Sigmoid colon (tissue), 7 donors: ENCODE measurements at regions of chr3 and their contacts with region 1.

Region 1: DNA sequence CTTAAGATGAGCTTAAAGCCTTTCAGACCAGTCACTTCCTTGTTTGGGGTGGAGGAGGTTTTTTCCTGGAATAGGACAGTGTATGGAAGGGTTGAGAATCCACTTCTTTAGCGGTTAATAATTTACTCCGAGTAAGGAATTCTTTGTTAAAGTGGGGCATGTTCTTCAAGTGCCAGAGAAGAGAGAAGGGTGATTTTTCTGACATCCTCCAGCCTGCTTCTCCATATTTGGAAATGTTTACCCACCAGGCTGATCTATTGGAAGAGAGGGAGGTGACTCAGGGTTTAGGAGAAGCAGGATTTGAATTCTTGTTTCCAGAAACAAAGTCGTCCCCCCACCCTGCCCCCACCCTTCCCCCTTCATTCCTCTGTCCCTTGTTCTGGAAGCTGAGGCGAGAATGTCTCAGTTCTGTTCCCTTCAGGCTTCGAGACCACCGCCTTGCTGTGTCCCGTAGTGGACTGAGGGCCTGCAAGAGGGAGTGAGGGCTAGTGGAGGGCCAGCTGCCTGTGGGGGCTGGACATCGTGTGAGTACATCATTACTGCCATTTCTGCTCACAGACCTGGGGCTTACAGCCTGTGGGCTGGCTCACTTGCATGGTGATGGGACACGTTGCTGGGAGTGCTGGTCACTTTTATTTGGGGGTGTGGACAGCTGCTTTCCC is 58.5 kb downstream of the LPP start:
- DNase-seq: peak; percentile 83
- H3K4me3 ChIP-seq: peak overlapping the region; percentile 41 to 56 (median 47)
- H3K27ac ChIP-seq: peak overlapping the region; percentile 84 to 97 (median 93)
- H3K4me1 ChIP-seq: peaks cover 0 to 70% (median 54%) of the 10 kb centered on the region in 4 donors
- H3K27me3 ChIP-seq: no peaks in the 10 kb centered on the region
- CTCF ChIP-seq: no peak
- EP300 ChIP-seq: peak; percentile 66 to 92 (median 80)
- POLR2A ChIP-seq: peak; percentile 32 to 51

Region 2: DNA sequence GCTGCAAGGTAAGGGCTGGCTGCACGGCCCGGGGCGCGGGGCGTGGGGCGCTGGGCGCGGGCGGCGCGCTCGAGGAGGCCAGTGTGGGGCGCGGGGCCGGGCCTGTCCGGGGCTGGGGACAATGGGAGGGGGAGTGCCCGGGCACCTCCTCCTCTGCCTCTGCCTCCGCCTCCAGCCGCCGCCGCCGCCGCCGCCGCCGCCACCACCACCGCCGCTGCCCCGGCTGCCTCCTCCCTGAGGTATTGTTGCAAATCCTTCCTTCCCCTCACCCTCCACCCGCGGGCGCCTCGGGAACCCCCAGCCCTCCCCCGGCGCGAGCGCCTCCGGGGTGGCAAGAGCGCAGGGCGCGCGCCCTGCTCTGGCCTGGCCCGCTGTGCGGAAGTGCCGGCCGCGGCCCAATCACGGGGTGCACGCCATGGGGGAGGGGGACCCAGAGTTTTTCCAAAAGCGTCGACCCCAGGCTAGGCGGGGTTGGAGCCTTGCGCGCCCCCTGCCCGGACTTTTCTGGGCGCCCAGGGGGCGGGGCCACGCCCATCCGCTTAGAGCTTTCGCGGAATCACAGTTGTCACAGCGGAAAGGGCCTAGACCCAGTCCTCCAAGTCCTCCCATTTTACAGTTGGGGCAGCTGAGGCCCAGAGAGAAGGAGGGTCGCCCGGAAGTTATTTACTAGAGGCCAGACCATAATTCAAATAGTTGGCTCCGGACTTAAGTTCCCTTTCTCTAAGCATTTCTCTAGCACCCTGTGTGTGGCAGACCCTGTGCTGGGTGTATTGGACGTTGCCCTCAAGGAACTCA is 58.2 kb before region 1 on chr3 and contains the start of gene LPP:
- intact Hi-C with region 1: loop called (anchors 2 kb)
- DNase-seq: peak; percentile 92
- H3K4me3 ChIP-seq: peak within 1 kb of the TSS; percentile 68 to 93 (median 84)
- H3K27ac ChIP-seq: peak within 1 kb of the TSS; percentile 95 to 99 (median 98)
- H3K4me1 ChIP-seq: peaks cover 0 to 57% (median 47%) of the 10 kb centered on the region in 4 donors
- H3K27me3 ChIP-seq: no peaks in the 10 kb centered on the region
- CTCF ChIP-seq: no peak
- EP300 ChIP-seq: peak in 3 of 4 donors; percentile 2 to 64 (median 14)
- POLR2A ChIP-seq: no peak
- total RNA-seq, gene LPP: 824 to 1,773 (median 1,187) TPM

Region 3: GRCh38 chr3:188179006-188179966 is 33.2 kb before region 1 on chr3:
- intact Hi-C with region 1: loop called (anchors 5 kb)
- DNase-seq: peak; percentile 89
- H3K4me3 ChIP-seq: no peak overlapping the region
- H3K27ac ChIP-seq: peak overlapping the region; percentile 76 to 99 (median 92)
- H3K4me1 ChIP-seq: peaks cover 0 to 99% (median 94%) of the 10 kb centered on the region in 4 donors
- H3K27me3 ChIP-seq: no peaks in the 10 kb centered on the region
- CTCF ChIP-seq: peak in 3 of 4 experiments; percentile 15 to 52 (median 22)
- EP300 ChIP-seq: peak in 2 of 4 donors; percentile 63 to 80
- POLR2A ChIP-seq: no peak

Region 4: GRCh38 chr3:188270423-188270972 is 58.1 kb after region 1 on chr3:
- intact Hi-C with region 1: loop called (anchors 2 kb)
- DNase-seq: no peak
- H3K4me3 ChIP-seq: no peak overlapping the region
- H3K27ac ChIP-seq: peak overlapping the region; percentile 88 to 94 (median 90)
- H3K4me1 ChIP-seq: peaks cover 0 to 97% (median 95%) of the 10 kb centered on the region in 4 donors
- H3K27me3 ChIP-seq: no peaks in the 10 kb centered on the region
- CTCF ChIP-seq: no peak
- EP300 ChIP-seq: peak in 3 of 4 donors; percentile 41 to 93 (median 77)
- POLR2A ChIP-seq: no peak